Heart left ventricle (tissue), 16 donors: ENCODE measurements at regions of chr4 and their contacts with region 1.

Region 1: GRCh38 chr4:140756319-140757231 is at the start of gene TBC1D9:
- DNase-seq: peak; percentile 88 to 91 (median 89)
- ATAC-seq: peak; percentile 84 to 92 (median 87)
- H3K4me3 ChIP-seq: peak within 1 kb of the TSS; percentile 59 to 95 (median 86)
- H3K27ac ChIP-seq: peak within 1 kb of the TSS; percentile 89 to 100 (median 98)
- H3K4me1 ChIP-seq: peaks cover 0 to 44% (median 15%) of the 10 kb centered on the region in 12 donors
- H3K27me3 ChIP-seq: no peaks in the 10 kb centered on the region
- CTCF ChIP-seq: peak in 4 of 12 donors; percentile 0 to 26 (median 16)
- POLR2A ChIP-seq: peak in 1 of 2 donors; percentile 56
- total RNA-seq, gene TBC1D9: 8.5 to 26.5 (median 15.0) TPM

Region 2: GRCh38 chr4:140359562-140360427 is 396.8 kb before region 1 on chr4:
- intact Hi-C with region 1: loop called in 1 of 10 experiments (anchors 10 kb)
- DNase-seq: peak in 4 of 5 donors; percentile 63 to 75 (median 70)
- ATAC-seq: peak in 3 of 4 donors; percentile 76 to 90 (median 79)
- H3K4me3 ChIP-seq: no peak overlapping the region
- H3K27ac ChIP-seq: no peak overlapping the region
- H3K4me1 ChIP-seq: no peaks in the 10 kb centered on the region
- H3K27me3 ChIP-seq: peaks cover 0 to 4% (median 0%) of the 10 kb centered on the region in 9 donors
- CTCF ChIP-seq: peak; percentile 67 to 84 (median 78)
- POLR2A ChIP-seq: no peak

Region 3: GRCh38 chr4:140556372-140557085 is 200.0 kb before region 1 on chr4:
- intact Hi-C with region 1: no loop called
- DNase-seq: no peak
- ATAC-seq: no peak
- H3K4me3 ChIP-seq: no peak overlapping the region
- H3K27ac ChIP-seq: no peak overlapping the region
- H3K4me1 ChIP-seq: no peaks in the 10 kb centered on the region
- H3K27me3 ChIP-seq: no peaks in the 10 kb centered on the region
- CTCF ChIP-seq: no peak
- POLR2A ChIP-seq: no peak

Region 4: GRCh38 chr4:140637836-140638235 is 118.7 kb before region 1 on chr4:
- intact Hi-C with region 1: loop called in 5 of 10 experiments (anchors 5 to 10 kb)
- DNase-seq: no peak
- ATAC-seq: no peak
- H3K4me3 ChIP-seq: no peak overlapping the region
- H3K27ac ChIP-seq: no peak overlapping the region
- H3K4me1 ChIP-seq: peaks cover 0 to 23% (median 6%) of the 10 kb centered on the region in 12 donors
- H3K27me3 ChIP-seq: no peaks in the 10 kb centered on the region
- CTCF ChIP-seq: peak; percentile 23 to 58 (median 40)
- POLR2A ChIP-seq: no peak

Region 5: DNA sequence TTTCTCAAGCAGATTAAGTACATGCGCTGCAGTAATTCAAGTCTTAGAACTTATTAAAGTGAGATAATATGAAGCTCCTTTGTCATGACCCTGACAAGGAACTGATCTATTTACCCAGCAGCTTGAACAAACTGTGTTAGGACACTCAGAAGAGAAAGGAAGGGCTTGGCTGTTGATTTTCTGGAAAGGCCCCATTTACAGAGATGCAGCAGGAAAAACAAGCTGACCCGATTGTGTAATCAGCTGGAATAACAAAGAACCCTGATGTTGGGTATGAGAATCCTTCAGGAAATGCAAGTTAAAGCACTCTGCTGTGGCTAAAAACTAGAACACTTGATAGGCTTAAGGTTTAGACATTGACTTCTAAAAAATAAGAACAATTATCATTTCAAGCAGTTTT is 65.2 kb before region 1 on chr4:
- intact Hi-C with region 1: loop called in 6 of 10 experiments (anchors 5 to 10 kb)
- DNase-seq: no peak
- ATAC-seq: peak; percentile 45 to 71 (median 64)
- H3K4me3 ChIP-seq: no peak overlapping the region
- H3K27ac ChIP-seq: peak overlapping the region in 10 of 12 donors; percentile 14 to 66 (median 46)
- H3K4me1 ChIP-seq: peaks cover 0 to 71% (median 23%) of the 10 kb centered on the region in 12 donors
- H3K27me3 ChIP-seq: no peaks in the 10 kb centered on the region
- CTCF ChIP-seq: no peak
- POLR2A ChIP-seq: no peak

Region 6: DNA sequence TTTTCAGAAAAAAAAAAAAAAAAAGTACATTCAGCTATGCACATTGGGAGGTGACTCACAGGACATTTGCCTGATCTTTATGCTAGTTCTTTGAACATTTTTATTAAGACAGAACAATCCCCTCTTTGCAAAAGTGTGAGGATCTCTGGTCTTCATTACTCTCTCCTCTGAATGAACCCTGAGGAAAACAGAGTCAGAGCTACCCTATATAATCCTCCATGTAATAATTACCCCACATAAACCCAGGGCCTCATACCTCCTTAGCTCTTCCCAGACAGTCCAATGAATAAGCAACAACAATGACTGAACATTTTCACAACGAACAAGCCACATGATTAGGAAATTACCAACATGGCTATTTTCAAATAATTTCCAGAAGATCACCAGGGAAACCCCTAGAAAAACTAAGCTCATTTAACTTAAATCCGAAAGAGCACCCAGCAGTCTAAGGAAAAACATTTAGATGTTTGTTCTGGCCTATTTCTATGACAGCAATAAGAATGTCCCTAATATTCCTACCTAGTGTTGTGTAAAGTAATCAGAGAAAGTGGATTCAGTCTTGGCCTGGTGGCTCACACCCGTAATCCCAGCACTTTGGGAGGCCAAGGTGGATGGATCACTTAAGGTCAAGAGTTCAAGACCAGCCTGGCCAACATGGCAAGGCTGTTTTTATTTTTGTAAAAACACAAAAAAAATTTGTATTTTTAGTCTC is 38.2 kb before region 1 on chr4:
- intact Hi-C with region 1: loop called in 1 of 10 experiments (anchors 5 kb)
- DNase-seq: no peak
- ATAC-seq: no peak
- H3K4me3 ChIP-seq: no peak overlapping the region
- H3K27ac ChIP-seq: peak overlapping the region in 1 of 12 donors; percentile 64
- H3K4me1 ChIP-seq: peaks cover 0 to 58% (median 26%) of the 10 kb centered on the region in 12 donors
- H3K27me3 ChIP-seq: no peaks in the 10 kb centered on the region
- CTCF ChIP-seq: no peak
- POLR2A ChIP-seq: no peak

Region 7: DNA sequence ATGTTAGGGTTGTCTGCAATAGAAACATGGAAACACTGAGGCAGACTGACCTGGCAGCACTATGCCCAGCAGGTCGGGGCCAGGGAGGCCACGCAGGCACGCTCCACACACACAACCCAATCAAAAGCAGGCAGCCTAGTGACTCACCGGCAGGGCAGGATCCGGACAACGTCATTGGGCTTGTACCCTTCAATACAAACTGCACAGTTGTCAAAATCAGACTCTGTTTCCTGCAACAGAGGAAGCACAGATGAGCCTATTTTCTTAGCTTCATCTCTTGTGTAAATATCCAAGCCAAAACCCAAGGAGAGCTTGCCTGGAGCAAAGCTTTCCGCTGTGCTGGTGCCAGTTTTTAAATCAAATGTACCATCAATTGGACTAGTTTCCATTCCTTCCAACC is 190.9 kb after region 1 on chr4:
- intact Hi-C with region 1: no loop called
- DNase-seq: peak in 1 of 5 donors; percentile 58
- ATAC-seq: peak; percentile 44 to 91 (median 76)
- H3K4me3 ChIP-seq: no peak overlapping the region
- H3K27ac ChIP-seq: peak overlapping the region in 1 of 12 donors; percentile 73
- H3K4me1 ChIP-seq: peaks cover 0 to 26% (median 11%) of the 10 kb centered on the region in 12 donors
- H3K27me3 ChIP-seq: no peaks in the 10 kb centered on the region
- CTCF ChIP-seq: no peak
- POLR2A ChIP-seq: no peak

Region 8: DNA sequence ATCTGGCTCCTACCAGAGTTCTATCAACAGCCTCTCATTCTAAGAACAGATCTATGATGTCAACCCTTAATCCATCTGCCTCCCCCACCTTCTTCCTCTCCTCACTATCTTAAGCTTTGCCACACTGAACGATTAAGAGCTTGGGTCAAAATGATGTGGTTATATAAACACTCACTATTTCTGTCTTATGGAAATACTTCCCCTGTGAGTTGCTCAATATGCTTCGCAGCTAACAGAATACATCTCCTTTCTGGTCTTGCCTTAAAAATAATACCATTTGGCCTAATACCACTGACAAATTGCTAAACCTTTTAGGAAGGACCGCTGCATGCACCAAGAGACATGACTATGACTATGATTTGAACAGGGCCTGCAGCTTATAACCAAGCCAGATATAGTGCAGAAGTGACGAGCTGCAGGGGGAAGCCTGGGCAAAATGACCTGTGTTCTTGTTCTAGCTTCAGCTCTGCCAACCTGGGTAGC is 245.8 kb after region 1 on chr4:
- intact Hi-C with region 1: no loop called
- DNase-seq: peak in 2 of 5 donors; percentile 40 to 50
- ATAC-seq: peak; percentile 82 to 89 (median 88)
- H3K4me3 ChIP-seq: peak overlapping the region in 1 of 12 donors; percentile 5
- H3K27ac ChIP-seq: peak overlapping the region; percentile 60 to 88 (median 77)
- H3K4me1 ChIP-seq: peaks cover 0 to 61% (median 18%) of the 10 kb centered on the region in 12 donors
- H3K27me3 ChIP-seq: no peaks in the 10 kb centered on the region
- CTCF ChIP-seq: no peak
- POLR2A ChIP-seq: no peak

Region 9: DNA sequence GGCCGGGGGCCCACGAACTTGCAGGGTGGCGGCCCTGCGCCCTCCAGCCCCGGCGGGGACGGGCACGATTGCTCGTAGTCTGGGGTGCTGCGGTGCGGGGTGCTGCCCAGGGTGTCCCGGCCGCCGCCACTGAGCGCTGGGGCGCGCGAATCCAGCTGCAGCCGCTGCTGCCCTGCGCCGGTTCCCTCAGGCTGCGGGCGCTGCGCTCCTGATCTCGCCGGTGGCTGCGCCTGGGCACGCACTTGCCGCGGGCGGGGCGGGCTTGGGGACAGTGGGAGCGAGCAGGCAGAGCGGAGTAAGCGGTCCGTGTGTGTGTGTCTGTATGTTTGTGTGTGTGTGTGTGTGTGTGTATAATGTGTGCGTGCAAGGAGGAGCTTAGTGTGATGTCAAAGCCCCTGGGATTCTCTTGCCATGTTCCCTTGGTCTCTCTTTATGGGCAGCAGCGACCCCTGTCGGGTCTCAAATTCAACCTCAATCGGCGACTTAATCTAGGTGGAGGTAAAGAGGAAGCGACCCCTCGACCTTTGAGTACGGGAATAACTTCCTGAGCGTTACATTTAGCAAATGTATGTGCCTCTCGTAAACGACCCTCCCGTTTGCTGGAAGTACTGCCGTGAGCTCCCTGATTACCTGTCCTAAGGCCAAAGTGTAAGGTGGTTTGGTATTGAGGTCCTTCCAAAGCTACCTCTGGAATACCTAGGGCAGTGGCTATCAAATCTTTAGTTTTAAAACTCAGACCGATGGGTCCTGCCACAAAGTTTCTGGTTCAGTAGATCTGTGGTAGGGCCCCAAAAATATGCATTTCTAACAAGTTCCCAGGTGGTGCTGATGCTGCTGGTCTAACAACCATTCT is 376.8 kb after region 1 on chr4 and contains the start of gene RNF150:
- intact Hi-C with region 1: loop called in 1 of 10 experiments (anchors 10 kb)
- DNase-seq: peak; percentile 79 to 84 (median 83)
- ATAC-seq: peak; percentile 76 to 88 (median 86)
- H3K4me3 ChIP-seq: peak within 1 kb of the TSS; percentile 59 to 96 (median 83)
- H3K27ac ChIP-seq: peak within 1 kb of the TSS; percentile 82 to 96 (median 91)
- H3K4me1 ChIP-seq: peaks cover 0 to 37% (median 4%) of the 10 kb centered on the region in 12 donors
- H3K27me3 ChIP-seq: peaks cover 0 to 43% (median 0%) of the 10 kb centered on the region in 9 donors
- CTCF ChIP-seq: peak; percentile 34 to 73 (median 68)
- POLR2A ChIP-seq: peak in 1 of 2 donors; percentile 25
- total RNA-seq, gene RNF150: 52.0 to 146 (median 73.3) TPM